ENCODE measurements at regions of chr11 and their contacts with region 1.

Region 1: DNA sequence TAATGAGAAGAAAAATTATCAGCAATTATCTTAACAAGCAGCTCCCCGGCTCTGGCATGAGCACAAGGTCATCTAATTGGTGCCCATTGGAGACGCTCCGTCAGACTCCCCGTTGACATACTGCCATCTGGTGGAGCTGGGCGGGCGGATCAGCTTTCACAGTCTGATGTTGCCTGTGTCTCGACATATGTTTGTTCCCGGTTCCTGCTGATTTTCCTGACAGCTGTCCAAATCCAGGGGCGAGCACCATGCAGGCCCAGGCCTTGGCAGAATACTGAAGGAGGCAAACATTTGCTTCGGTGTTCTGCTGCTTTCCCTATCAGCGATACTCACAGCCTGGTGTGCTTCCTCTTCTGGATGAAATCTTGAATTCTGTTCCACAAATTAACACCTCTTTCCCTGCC is 43.8 kb upstream of the BARX2 start:
- DNase-seq: peak; percentile 64 to 77 (median 75)
- H3K4me3 ChIP-seq: peak overlapping the region in 1 of 7 experiments; percentile 42
- H3K27ac ChIP-seq: no peak overlapping the region
- H3K4me1 ChIP-seq: peaks cover 0 to 2% (median 0%) of the 10 kb centered on the region in 4 experiments
- H3K27me3 ChIP-seq: no peaks in the 10 kb centered on the region

Region 2: GRCh38 chr11:129117595-129118350 is 214.1 kb before region 1 on chr11:
- CTCF ChIA-PET with region 1: interaction called, 19 read pairs
- POLR2A ChIA-PET with region 1: no interaction called
- DNase-seq: peak; percentile 62 to 85 (median 80)
- H3K4me3 ChIP-seq: no peak overlapping the region
- H3K27ac ChIP-seq: no peak overlapping the region
- H3K4me1 ChIP-seq: no peaks in the 10 kb centered on the region
- H3K27me3 ChIP-seq: no peaks in the 10 kb centered on the region

Region 3: GRCh38 chr11:129230006-129230405 is 101.9 kb before region 1 on chr11:
- CTCF ChIA-PET with region 1: interaction called, 38 read pairs
- POLR2A ChIA-PET with region 1: no interaction called
- DNase-seq: peak; percentile 47 to 64 (median 60)
- H3K4me3 ChIP-seq: no peak overlapping the region
- H3K27ac ChIP-seq: no peak overlapping the region
- H3K4me1 ChIP-seq: no peaks in the 10 kb centered on the region
- H3K27me3 ChIP-seq: no peaks in the 10 kb centered on the region

Region 4: DNA sequence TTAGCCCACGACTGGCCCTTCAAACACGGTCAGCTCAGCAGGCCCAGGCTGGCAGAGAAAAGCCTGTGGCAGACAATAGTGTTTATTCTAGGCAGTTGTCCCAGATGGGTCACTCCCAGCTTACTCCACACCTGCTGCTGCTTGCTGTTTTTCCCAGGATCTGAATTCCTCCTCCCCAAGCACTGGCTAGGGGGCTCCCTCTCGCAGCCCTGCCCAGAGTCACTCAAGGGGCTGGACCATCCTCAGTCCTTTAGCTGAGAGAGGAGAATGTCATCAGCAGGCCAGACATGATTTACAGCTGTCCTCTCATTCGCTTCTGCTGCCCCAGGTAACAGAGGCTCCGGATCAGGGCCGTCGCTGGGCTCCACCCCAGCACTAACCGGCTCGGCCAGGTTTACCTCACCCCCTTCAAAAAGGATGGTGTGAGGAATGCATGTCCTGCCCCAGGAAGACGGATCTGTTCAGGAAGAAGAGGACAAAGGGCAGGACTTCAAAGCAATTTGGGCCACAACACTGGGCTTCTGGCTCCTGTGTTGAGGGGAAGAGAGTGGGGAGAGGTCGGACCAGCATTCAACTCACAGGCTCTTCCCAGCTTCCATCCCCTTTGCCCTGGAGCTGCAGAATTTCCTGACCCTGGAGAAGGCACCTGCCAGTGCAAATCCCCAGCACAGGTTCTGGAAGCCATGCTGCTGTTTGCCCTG is 15.9 kb before region 1 on chr11:
- CTCF ChIA-PET with region 1: interaction called, 19 read pairs
- POLR2A ChIA-PET with region 1: no interaction called
- DNase-seq: no peak
- H3K4me3 ChIP-seq: no peak overlapping the region
- H3K27ac ChIP-seq: no peak overlapping the region
- H3K4me1 ChIP-seq: peaks cover 0 to 18% (median 9%) of the 10 kb centered on the region in 4 experiments
- H3K27me3 ChIP-seq: no peaks in the 10 kb centered on the region

Region 5: GRCh38 chr11:129346916-129347315 is 15.0 kb after region 1 on chr11:
- CTCF ChIA-PET with region 1: no interaction called
- POLR2A ChIA-PET with region 1: no interaction called
- DNase-seq: no peak
- H3K4me3 ChIP-seq: no peak overlapping the region
- H3K27ac ChIP-seq: no peak overlapping the region
- H3K4me1 ChIP-seq: no peaks in the 10 kb centered on the region
- H3K27me3 ChIP-seq: peaks cover 0 to 12% (median 2%) of the 10 kb centered on the region in 5 experiments

Region 6: GRCh38 chr11:129359748-129360147 is 27.9 kb after region 1 on chr11:
- CTCF ChIA-PET with region 1: no interaction called
- POLR2A ChIA-PET with region 1: no interaction called
- DNase-seq: no peak
- H3K4me3 ChIP-seq: no peak overlapping the region
- H3K27ac ChIP-seq: no peak overlapping the region
- H3K4me1 ChIP-seq: no peaks in the 10 kb centered on the region
- H3K27me3 ChIP-seq: peaks cover 8 to 46% (median 18%) of the 10 kb centered on the region in 5 experiments